Activated CD4-positive, alpha-beta T cell treated with anti-CD3 and anti-CD28 coated beads, Interleukin-2, amount 10 ng/mL, durations not matched to agents 24 days and 14 days (primary cell): ENCODE measurements at regions of chr15 and their contacts with region 1.

Region 1: GRCh38 chr15:95596496-95596895 is 734.0 kb upstream of the NR2F2 start:
- DNase-seq: no peak
- H3K4me3 Mint-ChIP-seq: no peak overlapping the region
- H3K27ac Mint-ChIP-seq: no peak overlapping the region
- H3K4me1 Mint-ChIP-seq: no peaks in the 10 kb centered on the region
- H3K27me3 Mint-ChIP-seq: peaks cover 2% of the 10 kb centered on the region

Region 2: GRCh38 chr15:95656595-95656994 is 60.1 kb after region 1 on chr15:
- intact Hi-C with region 1: loop called (anchors 2 kb)
- DNase-seq: no peak
- H3K4me3 Mint-ChIP-seq: no peak overlapping the region
- H3K27ac Mint-ChIP-seq: no peak overlapping the region
- H3K4me1 Mint-ChIP-seq: no peaks in the 10 kb centered on the region
- H3K27me3 Mint-ChIP-seq: peaks cover 5% of the 10 kb centered on the region

Region 3: DNA sequence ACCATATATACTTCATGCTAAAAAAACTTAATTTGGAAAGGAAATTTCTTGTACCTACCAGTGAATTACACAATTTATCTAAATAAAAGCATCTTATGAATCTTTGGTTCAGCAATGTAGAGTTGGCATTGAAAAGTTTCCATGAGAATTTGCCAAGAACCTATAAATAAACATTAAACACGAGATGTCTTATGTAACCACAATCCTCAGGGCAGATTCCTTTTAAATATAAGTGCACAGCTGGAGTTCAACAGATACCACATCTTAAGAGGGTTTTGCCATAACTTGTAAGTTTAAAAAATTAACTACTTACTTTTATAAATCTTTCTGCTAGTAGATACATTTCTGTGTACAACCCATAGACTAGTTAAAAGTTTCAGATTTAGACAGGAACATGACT is 1864.7 kb after region 1 on chr15:
- intact Hi-C with region 1: no loop called
- DNase-seq: no peak
- H3K4me3 Mint-ChIP-seq: no peak overlapping the region
- H3K27ac Mint-ChIP-seq: no peak overlapping the region
- H3K4me1 Mint-ChIP-seq: no peaks in the 10 kb centered on the region
- H3K27me3 Mint-ChIP-seq: no peaks in the 10 kb centered on the region